A673 (cell line): ENCODE measurements at regions of chr16 and their contacts with region 1.

Region 1: GRCh38 chr16:22402191-22402590 is 27.8 kb upstream of the CDR2 start:
- DNase-seq: peak; percentile 60
- H3K4me3 ChIP-seq: no peak overlapping the region
- H3K27ac ChIP-seq: peak overlapping the region; percentile 45
- H3K4me1 ChIP-seq: peaks cover 27% of the 10 kb centered on the region
- H3K27me3 ChIP-seq: no peaks in the 10 kb centered on the region
- CTCF ChIP-seq: no peak

Region 2: GRCh38 chr16:22353191-22353919 is 48.8 kb before region 1 on chr16:
- CTCF ChIA-PET with region 1: no interaction called
- POLR2A ChIA-PET with region 1: no interaction called
- intact Hi-C with region 1: loop called (anchors 5 kb)
- DNase-seq: peak; percentile 83
- H3K4me3 ChIP-seq: no peak overlapping the region
- H3K27ac ChIP-seq: peak overlapping the region; percentile 69
- H3K4me1 ChIP-seq: peaks cover 35% of the 10 kb centered on the region
- H3K27me3 ChIP-seq: no peaks in the 10 kb centered on the region
- CTCF ChIP-seq: no peak

Region 3: GRCh38 chr16:22413819-22414218 is 11.6 kb after region 1 on chr16:
- CTCF ChIA-PET with region 1: no interaction called
- POLR2A ChIA-PET with region 1: no interaction called
- intact Hi-C with region 1: loop called (anchors 1 kb)
- DNase-seq: no peak
- H3K4me3 ChIP-seq: no peak overlapping the region
- H3K27ac ChIP-seq: no peak overlapping the region
- H3K4me1 ChIP-seq: no peaks in the 10 kb centered on the region
- H3K27me3 ChIP-seq: no peaks in the 10 kb centered on the region
- CTCF ChIP-seq: no peak